ENCODE measurements at regions of chr11 and their contacts with region 1.

Region 1: GRCh38 chr11:57368106-57368844 is 12.7 kb downstream of the PRG3 start:
- DNase-seq: no peak
- ATAC-seq: no peak

Region 2: GRCh38 chr11:56917708-56918400 is 450.4 kb before region 1 on chr11:
- intact Hi-C with region 1: no loop called
- DNase-seq: no peak
- ATAC-seq: no peak

Region 3: DNA sequence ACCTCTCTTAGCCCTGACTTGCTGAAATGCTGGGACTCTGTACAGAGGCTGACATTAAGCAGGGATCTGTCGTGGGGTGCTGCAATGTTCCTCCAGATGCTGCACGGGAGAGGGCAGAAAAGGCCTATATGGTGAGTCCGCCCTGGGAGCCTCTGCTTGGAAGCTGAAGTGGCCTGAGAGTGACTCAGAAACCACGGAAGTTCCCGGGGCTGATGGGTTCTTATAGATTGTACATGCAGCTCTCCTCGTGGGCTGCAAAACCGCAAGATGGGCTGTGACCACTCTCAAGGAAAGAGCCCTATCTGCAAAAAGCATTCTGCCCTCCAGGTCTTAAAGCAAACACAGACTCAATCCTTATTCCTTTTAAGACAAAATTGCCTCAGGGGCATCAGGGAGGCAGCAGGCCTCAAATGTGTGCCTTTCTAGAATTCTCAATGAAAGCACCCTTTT is 64.5 kb after region 1 on chr11:
- intact Hi-C with region 1: loop called (anchors 10 kb)
- DNase-seq: no peak
- ATAC-seq: no peak